PC-3 (cell line): ENCODE measurements at regions of chr11 and their contacts with region 1.

Region 1: GRCh38 chr11:113664069-113664980 is 41.8 kb downstream of the TMPRSS5 start:
- DNase-seq: peak; percentile 95
- ATAC-seq: peak; percentile 84
- H3K4me3 ChIP-seq: peak overlapping the region; percentile 50
- H3K27ac ChIP-seq: peak overlapping the region; percentile 81
- H3K4me1 ChIP-seq: peaks cover 53% of the 10 kb centered on the region
- H3K27me3 ChIP-seq: no peaks in the 10 kb centered on the region
- CTCF ChIP-seq: no peak

Region 2: GRCh38 chr11:113618360-113618759 is 46.0 kb before region 1 on chr11:
- CTCF ChIA-PET with region 1: no interaction called
- POLR2A ChIA-PET with region 1: no interaction called
- intact Hi-C with region 1: loop called (anchors 1 kb)
- DNase-seq: peak; percentile 98
- ATAC-seq: peak; percentile 90
- H3K4me3 ChIP-seq: no peak overlapping the region
- H3K27ac ChIP-seq: no peak overlapping the region; the same call in 1 of the 2 replicates
- H3K4me1 ChIP-seq: peaks cover 13% of the 10 kb centered on the region
- H3K27me3 ChIP-seq: no peaks in the 10 kb centered on the region
- CTCF ChIP-seq: no peak

Region 3: DNA sequence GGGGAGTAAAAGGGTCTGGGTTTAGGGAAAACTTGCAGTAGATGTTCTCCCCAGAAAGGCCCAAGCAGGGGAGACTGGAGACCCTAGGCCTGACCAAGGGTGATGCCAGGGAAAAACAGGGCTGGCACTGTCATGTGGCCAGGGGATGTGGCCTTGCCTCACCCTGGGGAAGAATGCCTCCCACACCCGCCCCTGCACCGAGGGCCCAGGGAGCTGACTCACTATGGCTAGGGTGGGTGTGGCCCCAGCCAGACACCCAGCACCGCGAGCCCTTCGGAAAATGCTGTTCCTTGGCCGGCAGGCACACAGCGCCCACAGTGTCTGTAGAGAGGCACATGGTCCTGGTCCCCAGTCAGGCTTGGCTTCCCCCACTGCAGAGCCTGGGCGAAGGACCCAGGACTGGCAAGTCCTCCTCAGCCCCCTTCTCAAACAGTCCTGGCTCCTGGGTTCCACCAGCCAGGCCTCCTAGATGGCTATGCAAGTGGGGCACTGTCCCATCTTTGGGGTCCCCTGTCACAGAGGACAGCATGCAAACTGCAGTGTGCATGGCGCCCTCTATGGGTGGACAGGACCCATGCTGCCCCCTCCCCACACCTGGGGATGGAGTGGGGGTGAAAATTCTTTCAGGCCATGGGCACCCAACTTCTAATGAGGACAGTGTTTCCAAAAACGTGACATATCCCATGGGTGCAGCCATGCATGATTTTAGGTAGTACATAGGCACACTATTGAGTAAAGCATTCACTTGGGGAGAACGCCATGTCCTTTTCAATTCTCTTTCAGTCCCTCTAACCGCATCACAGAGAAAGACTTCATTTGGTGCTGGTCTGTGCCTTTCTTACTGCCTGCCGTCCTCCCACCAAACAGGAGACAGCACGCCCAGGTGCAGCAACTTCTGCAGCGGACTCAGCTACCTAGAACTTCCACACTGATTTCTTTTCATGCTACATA is 26.6 kb after region 1 on chr11:
- CTCF ChIA-PET with region 1: no interaction called
- POLR2A ChIA-PET with region 1: interaction called, 4 read pairs
- intact Hi-C with region 1: loop called (anchors 1 kb)
- DNase-seq: peak; percentile 97
- ATAC-seq: peak; percentile 99
- H3K4me3 ChIP-seq: no peak overlapping the region
- H3K27ac ChIP-seq: peak overlapping the region; percentile 60
- H3K4me1 ChIP-seq: peaks cover 19% of the 10 kb centered on the region
- H3K27me3 ChIP-seq: no peaks in the 10 kb centered on the region
- CTCF ChIP-seq: peak; percentile 93

Region 4: GRCh38 chr11:113697756-113698407 is 33.6 kb after region 1 on chr11:
- CTCF ChIA-PET with region 1: no interaction called
- POLR2A ChIA-PET with region 1: no interaction called
- intact Hi-C with region 1: loop called (anchors 1 kb)
- DNase-seq: peak; percentile 82
- ATAC-seq: peak; percentile 91
- H3K4me3 ChIP-seq: no peak overlapping the region
- H3K27ac ChIP-seq: peak overlapping the region; percentile 56
- H3K4me1 ChIP-seq: peaks cover 20% of the 10 kb centered on the region
- H3K27me3 ChIP-seq: no peaks in the 10 kb centered on the region
- CTCF ChIP-seq: no peak

Region 5: GRCh38 chr11:113730887-113731726 is 66.8 kb after region 1 on chr11:
- CTCF ChIA-PET with region 1: interaction called, 5 read pairs
- POLR2A ChIA-PET with region 1: no interaction called
- intact Hi-C with region 1: loop called (anchors 2 kb)
- DNase-seq: peak; percentile 83
- ATAC-seq: peak; percentile 87
- H3K4me3 ChIP-seq: no peak overlapping the region
- H3K27ac ChIP-seq: no peak overlapping the region
- H3K4me1 ChIP-seq: peaks cover under 1% of the 10 kb centered on the region; the same call in 1 of the 2 replicates
- H3K27me3 ChIP-seq: no peaks in the 10 kb centered on the region
- CTCF ChIP-seq: peak; percentile 93

Region 6: GRCh38 chr11:114001416-114001815 is 337.1 kb after region 1 on chr11:
- CTCF ChIA-PET with region 1: no interaction called
- POLR2A ChIA-PET with region 1: no interaction called
- intact Hi-C with region 1: no loop called
- DNase-seq: no peak
- ATAC-seq: no peak
- H3K4me3 ChIP-seq: no peak overlapping the region
- H3K27ac ChIP-seq: no peak overlapping the region
- H3K4me1 ChIP-seq: no peaks in the 10 kb centered on the region
- H3K27me3 ChIP-seq: peaks cover 68% of the 10 kb centered on the region
- CTCF ChIP-seq: no peak